Activated CD4-positive, alpha-beta T cell treated with anti-CD3 and anti-CD28 coated beads, Interleukin-2, amount 10 ng/mL, durations not matched to agents 7 days and 5 days (primary cell): ENCODE measurements at regions of chr16 and their contacts with region 1.

Region 1: DNA sequence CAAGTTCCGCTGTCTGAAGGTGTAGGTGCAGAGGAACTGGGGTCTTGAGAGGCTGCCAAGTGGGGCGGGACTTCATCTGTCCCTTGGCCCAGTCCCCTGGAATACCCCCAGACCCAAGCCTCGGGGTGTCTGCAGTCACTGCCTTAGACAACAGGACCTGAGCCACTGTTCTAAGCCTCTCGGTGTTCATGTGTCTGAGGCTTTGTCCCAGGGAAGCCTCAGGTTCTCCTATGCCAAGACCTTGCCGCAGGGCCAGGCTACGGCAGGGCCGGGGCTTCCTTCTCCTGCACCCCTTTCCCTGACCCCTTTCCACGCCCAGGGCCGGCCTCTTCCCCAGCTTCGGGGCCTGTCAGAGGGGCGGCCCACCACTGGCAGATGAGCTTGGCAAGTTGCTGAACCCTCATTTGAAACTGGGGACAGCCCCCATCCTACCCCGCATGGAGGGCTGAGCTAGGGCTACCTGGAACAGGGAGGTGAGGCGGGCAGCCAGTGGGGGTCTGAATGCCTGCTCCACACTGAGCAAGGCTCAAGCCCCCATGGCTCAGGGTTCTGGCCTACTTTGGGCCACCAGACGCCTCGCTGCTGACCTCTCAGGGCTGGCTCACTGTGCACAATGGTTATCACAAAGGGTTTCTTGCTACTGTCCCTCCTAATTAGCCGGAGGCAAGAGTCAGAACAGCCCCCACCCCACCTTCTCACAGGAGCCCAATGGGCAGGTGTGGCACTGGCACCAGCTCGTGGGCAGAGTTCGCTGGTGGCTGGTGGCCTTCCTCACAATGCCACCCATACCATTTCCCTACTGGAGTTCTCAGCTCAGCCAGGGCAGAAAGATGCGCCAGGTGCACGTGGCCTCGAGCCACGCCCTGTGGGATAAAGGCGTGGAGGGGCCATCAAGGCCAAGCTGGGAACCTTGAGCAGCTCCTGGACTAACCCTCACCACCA is 7.1 kb downstream of the LITAFD start:
- DNase-seq: no peak
- H3K4me3 Mint-ChIP-seq: no peak overlapping the region
- H3K27ac Mint-ChIP-seq: no peak overlapping the region
- H3K4me1 Mint-ChIP-seq: no peaks in the 10 kb centered on the region
- H3K27me3 Mint-ChIP-seq: peaks cover 6% of the 10 kb centered on the region

Region 2: GRCh38 chr16:8806272-8806983 is 82.8 kb before region 1 on chr16:
- CTCF ChIA-PET with region 1: no interaction called
- POLR2A ChIA-PET with region 1: no interaction called
- DNase-seq: no peak
- H3K4me3 Mint-ChIP-seq: no peak overlapping the region
- H3K27ac Mint-ChIP-seq: peak overlapping the region; percentile 55
- H3K4me1 Mint-ChIP-seq: peaks cover 11% of the 10 kb centered on the region
- H3K27me3 Mint-ChIP-seq: no peaks in the 10 kb centered on the region

Region 3: GRCh38 chr16:8878521-8878911 is 10.7 kb before region 1 on chr16:
- CTCF ChIA-PET with region 1: interaction called, 17 read pairs
- POLR2A ChIA-PET with region 1: no interaction called
- DNase-seq: no peak
- H3K4me3 Mint-ChIP-seq: no peak overlapping the region
- H3K27ac Mint-ChIP-seq: no peak overlapping the region
- H3K4me1 Mint-ChIP-seq: peaks cover 21% of the 10 kb centered on the region
- H3K27me3 Mint-ChIP-seq: no peaks in the 10 kb centered on the region

Region 4: DNA sequence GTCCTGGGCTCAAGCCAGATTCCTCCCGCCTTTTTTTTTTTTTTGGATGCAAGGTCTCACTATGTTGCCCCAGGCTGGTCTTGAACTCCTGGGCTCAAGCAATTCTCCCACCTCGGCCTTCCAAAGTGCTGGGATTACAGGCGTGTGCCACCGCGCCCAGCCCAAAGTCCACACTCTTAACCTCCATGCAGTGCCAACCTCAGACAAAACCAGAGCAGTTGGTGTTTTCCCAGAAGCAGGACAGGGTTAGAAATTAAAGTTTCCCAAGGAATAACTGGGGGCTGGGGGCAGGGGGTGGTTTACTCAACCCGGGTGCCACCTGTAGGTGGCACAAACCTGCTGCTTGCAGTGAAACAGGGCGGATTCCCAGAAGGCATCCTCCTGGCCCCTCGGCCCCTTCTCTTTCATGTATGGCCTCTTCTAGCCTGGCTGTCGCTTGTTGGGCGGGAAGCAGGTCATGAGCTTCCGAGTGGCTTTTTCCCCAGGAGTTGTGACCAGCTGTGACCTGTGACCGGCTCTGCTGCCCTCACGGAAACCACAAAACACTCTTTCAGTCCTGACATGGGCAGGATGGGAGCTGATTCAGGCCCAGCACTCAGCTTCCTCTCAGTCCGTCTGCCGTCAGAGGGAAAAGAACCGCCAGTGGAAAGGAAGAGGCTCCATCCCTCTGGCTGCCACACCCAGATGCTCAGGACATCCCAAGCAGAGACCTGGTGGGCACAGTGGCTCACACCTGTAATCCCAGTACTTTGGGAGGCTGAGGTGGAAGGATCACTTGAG is 100.1 kb after region 1 on chr16:
- CTCF ChIA-PET with region 1: no interaction called
- POLR2A ChIA-PET with region 1: no interaction called
- DNase-seq: no peak
- H3K4me3 Mint-ChIP-seq: no peak overlapping the region
- H3K27ac Mint-ChIP-seq: no peak overlapping the region
- H3K4me1 Mint-ChIP-seq: no peaks in the 10 kb centered on the region
- H3K27me3 Mint-ChIP-seq: no peaks in the 10 kb centered on the region